Dorsolateral prefrontal cortex (tissue), 120 donors: ENCODE measurements at regions of chr22 and their contacts with region 1.

Region 1: DNA sequence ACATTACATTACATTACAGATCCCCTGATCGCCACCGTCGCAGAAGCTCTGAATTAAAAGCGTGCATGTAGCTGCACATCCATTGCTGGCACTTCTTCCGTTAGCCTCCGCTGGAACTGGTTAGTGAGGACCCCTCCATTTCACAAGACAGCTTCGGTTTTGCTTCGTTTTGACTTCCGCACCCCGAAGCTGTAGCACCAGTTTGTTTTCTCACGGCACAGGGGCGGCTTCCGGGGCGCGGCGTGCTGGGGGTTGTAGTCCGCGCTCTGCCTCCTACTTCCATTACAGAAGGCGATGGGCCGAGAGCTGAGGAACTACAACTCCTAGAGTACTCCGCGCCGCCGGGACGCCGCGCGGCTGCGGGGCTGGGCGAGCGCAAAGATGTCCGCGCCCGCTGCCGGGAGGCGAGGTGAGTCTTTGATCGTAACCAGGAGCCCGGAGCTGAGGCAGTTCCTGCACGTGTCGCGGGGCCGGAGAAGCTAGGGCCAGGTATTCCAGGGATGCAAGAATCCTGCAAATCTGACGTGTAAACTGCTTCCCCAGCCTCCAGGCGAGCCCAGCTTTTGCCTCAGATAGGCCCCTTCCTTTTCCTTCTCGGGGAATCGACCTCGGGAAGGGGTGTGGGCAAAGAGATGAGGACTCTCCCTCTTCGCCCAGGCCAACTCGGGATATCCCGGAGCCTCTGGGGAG is at the start of gene PEX26:
- DNase-seq: peak; percentile 92 to 98 (median 97)
- H3K4me3 ChIP-seq: peak within 1 kb of the TSS; percentile 62 to 99 (median 93)
- H3K27ac ChIP-seq: peak within 1 kb of the TSS; percentile 30 to 96 (median 88)
- H3K27me3 ChIP-seq: no peaks in the 10 kb centered on the region
- CTCF ChIP-seq: peak in 41 of 56 donors; percentile 11 to 57 (median 36)
- total RNA-seq, gene PEX26: 40.8 to 77.7 (median 61.3) TPM

Region 2: DNA sequence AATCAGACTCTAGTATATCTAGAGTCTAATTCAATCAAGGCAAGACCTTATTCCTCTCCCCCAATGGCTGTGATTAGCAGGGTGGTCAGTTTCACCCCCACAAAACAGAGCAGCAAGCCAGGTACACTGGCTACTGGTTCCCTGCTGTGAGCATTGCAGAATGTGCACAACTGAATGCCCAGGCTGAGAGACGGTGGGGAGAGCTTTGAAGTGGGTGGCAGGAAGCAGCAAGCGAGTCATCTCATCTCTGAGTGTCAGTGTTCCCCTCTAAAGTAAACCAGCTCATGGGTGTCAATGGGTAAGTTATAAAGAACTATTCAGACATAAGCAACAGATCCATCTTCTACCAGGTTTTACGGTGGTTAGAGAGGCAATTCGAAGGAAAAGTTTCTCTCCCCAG is 1107.3 kb before region 1 on chr22:
- intact Hi-C with region 1: no loop called
- DNase-seq: no peak
- H3K4me3 ChIP-seq: no peak overlapping the region
- H3K27ac ChIP-seq: no peak overlapping the region
- H3K27me3 ChIP-seq: peaks cover 0 to 47% (median 6%) of the 10 kb centered on the region in 45 donors
- CTCF ChIP-seq: no peak

Region 3: GRCh38 chr22:17742527-17742902 is 335.3 kb before region 1 on chr22:
- intact Hi-C with region 1: loop called (anchors 5 to 10 kb)
- DNase-seq: peak; percentile 57 to 91 (median 77)
- H3K4me3 ChIP-seq: peak overlapping the region in 5 of 59 donors; percentile 1 to 43 (median 20)
- H3K27ac ChIP-seq: peak overlapping the region in 21 of 59 donors; percentile 25 to 79 (median 54)
- H3K27me3 ChIP-seq: no peaks in the 10 kb centered on the region
- CTCF ChIP-seq: peak; percentile 38 to 85 (median 76)

Region 4: DNA sequence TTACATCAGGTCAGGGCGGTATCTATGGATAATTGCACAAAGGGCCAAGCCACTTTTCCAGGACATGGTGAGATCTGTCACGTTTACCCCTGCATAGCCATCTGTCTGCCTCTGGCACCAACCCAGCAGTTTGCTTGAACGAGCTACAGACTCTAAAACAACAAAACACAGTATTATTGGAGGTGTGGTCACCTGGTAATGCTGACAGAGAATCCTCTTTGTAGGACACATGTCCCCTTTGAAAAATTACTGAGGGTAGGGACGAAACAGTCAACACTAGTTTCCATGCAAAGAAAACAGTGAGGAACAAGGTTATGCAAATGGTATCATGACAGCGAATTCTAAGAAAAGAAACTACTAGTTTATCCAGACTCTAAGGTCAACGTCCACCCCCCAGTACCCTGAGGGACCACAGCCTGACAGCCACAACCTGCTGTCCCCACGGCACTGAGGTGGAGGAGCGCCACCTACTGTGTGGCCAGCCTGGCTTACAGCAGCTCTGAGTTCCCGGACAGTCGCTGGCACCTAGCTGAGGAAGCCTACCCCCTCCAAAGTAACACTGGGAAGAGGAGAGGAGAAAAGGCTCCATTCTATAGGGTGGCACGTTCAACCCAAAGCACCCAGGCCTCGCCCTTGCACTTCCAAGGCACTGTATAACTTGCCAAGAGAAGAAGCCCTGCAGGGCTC is 186.2 kb before region 1 on chr22:
- intact Hi-C with region 1: loop called (anchors 1 to 5 kb)
- DNase-seq: peak in 7 of 10 donors; percentile 59 to 77 (median 65)
- H3K4me3 ChIP-seq: no peak overlapping the region
- H3K27ac ChIP-seq: peak overlapping the region in 52 of 59 donors; percentile 1 to 76 (median 55)
- H3K27me3 ChIP-seq: no peaks in the 10 kb centered on the region
- CTCF ChIP-seq: peak; percentile 11 to 81 (median 64)

Region 5: DNA sequence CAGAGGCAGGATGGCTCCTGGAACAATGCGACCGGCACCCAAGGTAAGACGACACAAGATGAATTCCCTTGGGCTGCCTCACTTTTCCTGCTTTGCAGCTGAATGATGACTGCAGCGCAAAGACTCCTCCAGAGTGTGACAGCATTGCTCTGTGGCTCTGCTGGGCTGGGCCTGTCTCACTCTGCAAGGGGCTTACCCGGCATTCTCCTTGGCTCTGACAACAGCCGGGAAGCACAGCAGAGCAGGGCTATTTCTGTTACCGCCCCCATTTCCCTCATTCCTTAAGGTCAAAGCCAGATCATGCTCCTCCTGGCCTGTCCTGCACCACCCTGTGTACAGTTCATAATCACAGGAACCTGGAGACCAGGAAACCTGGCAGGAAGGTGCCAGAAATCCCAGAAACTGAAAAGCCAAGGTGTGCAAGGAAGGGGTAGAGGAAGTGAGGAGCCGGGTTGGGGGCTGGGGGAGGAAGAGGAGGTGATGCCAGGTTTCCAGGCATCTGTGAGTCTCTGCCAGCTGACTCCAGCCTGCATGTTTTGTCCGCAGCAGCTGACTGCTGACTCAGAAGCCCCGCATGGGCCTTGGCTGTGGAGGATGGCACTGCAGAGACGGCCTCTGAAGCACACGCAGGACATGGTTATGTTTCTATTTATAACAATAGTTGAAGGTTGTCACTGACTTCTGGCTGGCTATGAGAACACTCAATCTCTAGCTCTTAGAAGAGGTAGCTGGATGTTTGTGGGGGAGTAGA is 167.0 kb before region 1 on chr22:
- intact Hi-C with region 1: loop called (anchors 1 to 5 kb)
- DNase-seq: peak; percentile 60 to 93 (median 82)
- H3K4me3 ChIP-seq: peak overlapping the region in 33 of 59 donors; percentile 1 to 42 (median 17)
- H3K27ac ChIP-seq: peak overlapping the region; percentile 53 to 98 (median 94)
- H3K27me3 ChIP-seq: no peaks in the 10 kb centered on the region
- CTCF ChIP-seq: peak in 53 of 56 donors; percentile 9 to 66 (median 49)

Region 6: DNA sequence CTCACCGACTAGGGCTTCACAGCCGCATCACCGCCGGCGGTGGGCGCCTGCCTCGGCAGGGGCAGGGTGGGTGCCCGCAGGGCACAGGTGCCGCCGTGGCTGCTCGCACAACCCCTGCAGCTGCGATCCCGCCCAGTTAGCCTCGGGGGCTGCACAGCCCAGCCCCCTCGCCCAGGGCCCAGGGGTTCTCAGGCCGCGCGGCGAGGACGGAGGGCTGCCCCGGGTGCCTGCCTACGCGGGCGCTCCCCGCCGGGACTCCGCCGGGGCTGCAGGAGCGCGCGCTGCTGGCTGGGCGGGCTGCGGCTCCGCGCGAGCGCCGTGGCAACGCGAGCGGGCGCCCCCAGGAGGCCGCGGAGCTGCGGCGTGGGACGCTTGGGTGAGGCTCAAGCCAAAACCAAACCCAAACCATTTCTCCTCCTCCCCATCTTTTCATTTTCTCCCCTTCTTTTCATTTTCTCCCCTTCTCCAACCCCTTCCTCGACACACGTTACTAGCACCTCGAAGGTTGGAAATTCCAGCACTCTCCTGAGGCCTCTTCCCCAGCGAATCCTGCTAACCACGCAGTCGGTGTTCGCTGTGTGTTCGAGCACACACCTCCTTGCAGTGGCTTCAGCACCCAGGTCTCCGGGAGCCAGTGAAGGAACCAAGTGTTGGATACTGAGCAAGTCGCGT is 53.4 kb before region 1 on chr22 and contains the start of gene MICAL3:
- intact Hi-C with region 1: loop called (anchors 1 to 2 kb)
- DNase-seq: peak in 9 of 10 donors; percentile 57 to 87 (median 67)
- H3K4me3 ChIP-seq: peak within 1 kb of the TSS; percentile 65 to 96 (median 86)
- H3K27ac ChIP-seq: peak within 1 kb of the TSS; percentile 59 to 97 (median 93)
- H3K27me3 ChIP-seq: no peaks in the 10 kb centered on the region
- CTCF ChIP-seq: peak in 54 of 56 donors; percentile 23 to 87 (median 60)
- total RNA-seq, gene MICAL3: 126 to 274 (median 183) TPM